ENCODE measurements at regions of chr12 and their contacts with region 1.

Region 1: DNA sequence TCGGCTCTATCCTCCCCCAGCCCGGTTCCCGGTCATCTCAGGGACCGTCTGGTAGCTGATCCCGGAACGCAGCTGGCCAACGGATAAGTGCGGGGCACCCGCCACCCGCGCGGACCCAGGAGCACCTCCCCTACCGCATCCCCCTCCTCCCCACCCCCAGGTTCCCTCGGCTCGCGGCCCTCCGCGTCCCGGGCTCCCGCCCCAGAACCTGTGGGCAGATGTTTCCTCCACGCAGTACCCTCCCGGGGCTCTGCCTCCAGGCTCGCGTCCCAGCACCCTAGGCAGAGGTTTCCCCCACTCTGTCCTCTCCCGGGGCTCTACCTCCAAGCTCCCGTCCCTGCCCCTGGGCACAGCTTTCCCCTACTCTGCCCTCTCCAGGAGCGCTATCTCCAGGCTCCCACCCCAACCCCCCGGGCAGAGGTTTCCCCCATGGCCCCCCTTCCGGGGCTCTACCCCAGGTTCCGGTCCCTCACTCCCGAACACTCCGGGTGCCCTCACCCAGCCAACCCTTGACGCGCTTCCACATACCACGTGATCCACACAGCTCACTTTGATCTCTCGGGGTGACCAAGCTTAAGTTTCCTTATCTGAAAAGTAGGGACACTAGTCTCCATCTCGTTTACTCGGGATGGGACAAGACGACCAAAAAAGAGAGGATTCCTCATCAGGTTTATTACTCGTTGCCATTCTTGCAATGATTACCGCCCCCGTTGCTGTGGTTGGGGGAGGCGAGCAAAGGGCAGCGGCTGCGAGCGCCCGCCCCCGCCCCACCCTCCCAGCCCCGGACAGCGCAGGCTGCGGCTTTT is at the start of gene CCDC38:
- DNase-seq: peak; percentile 79 to 87 (median 84)
- H3K4me3 ChIP-seq: peak within 1 kb of the TSS; percentile 69 to 92
- H3K4me3 Mint-ChIP-seq: peak within 1 kb of the TSS; percentile 92 to 97 (median 95)
- H3K27ac ChIP-seq: peak within 1 kb of the TSS; percentile 70
- H3K27ac Mint-ChIP-seq: peak within 1 kb of the TSS; percentile 86 to 97 (median 93)
- H3K4me1 ChIP-seq: peaks cover 12% of the 10 kb centered on the region
- H3K4me1 Mint-ChIP-seq: peaks cover 5 to 12% (median 7%) of the 10 kb centered on the region in 4 donors
- H3K27me3 ChIP-seq: no peaks in the 10 kb centered on the region
- H3K27me3 Mint-ChIP-seq: no peaks in the 10 kb centered on the region
- total RNA-seq, gene CCDC38: 0.23 to 1.0 TPM

Region 2: GRCh38 chr12:95473884-95474659 is 468.7 kb before region 1 on chr12 and contains the start of gene METAP2:
- CTCF ChIA-PET with region 1: no interaction called
- POLR2A ChIA-PET with region 1: interaction called, 21 read pairs
- intact Hi-C with region 1: no loop called
- DNase-seq: peak; percentile 87 to 92 (median 88)
- H3K4me3 ChIP-seq: peak within 1 kb of the TSS; percentile 83 to 99
- H3K4me3 Mint-ChIP-seq: peak within 1 kb of the TSS; percentile 99 to 100 (median 100)
- H3K27ac ChIP-seq: peak within 1 kb of the TSS; percentile 78
- H3K27ac Mint-ChIP-seq: peak within 1 kb of the TSS; percentile 90 to 100 (median 98)
- H3K4me1 ChIP-seq: peaks cover 50% of the 10 kb centered on the region
- H3K4me1 Mint-ChIP-seq: peaks cover 36 to 64% (median 54%) of the 10 kb centered on the region in 4 donors
- H3K27me3 ChIP-seq: no peaks in the 10 kb centered on the region
- H3K27me3 Mint-ChIP-seq: no peaks in the 10 kb centered on the region
- total RNA-seq, gene METAP2: 50.7 to 52.7 TPM

Region 3: DNA sequence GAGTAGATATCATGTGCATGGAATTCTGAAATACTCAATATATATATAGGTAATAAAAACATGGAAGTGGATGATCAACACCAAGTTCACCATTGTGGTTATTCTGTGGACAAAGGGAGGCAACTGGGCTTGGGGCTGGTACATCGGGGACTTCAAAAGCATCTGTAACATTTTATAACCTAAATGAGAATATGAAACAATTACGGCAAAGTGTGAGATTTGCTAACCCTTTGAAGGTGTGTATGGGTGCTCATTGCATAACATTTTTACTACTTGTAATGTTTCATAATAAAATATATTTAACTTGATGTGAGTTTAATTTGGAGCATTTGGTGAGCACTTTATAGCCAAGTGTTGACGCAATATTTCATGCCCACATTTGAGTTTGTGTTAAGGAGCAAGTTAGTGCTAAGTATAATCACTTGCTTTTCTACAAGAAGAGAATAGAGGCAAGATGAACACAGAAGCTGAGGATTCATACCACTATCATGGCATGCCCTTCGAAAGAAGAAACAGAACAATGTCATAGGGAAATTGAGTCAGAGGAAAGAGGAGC is 261.4 kb before region 1 on chr12:
- CTCF ChIA-PET with region 1: no interaction called
- POLR2A ChIA-PET with region 1: no interaction called
- intact Hi-C with region 1: no loop called
- DNase-seq: no peak
- H3K4me3 ChIP-seq: no peak overlapping the region
- H3K4me3 Mint-ChIP-seq: no peak overlapping the region
- H3K27ac ChIP-seq: no peak overlapping the region
- H3K27ac Mint-ChIP-seq: no peak overlapping the region
- H3K4me1 ChIP-seq: no peaks in the 10 kb centered on the region
- H3K4me1 Mint-ChIP-seq: no peaks in the 10 kb centered on the region
- H3K27me3 ChIP-seq: no peaks in the 10 kb centered on the region
- H3K27me3 Mint-ChIP-seq: peaks cover 2 to 4% of the 10 kb centered on the region in 2 donors

Region 4: DNA sequence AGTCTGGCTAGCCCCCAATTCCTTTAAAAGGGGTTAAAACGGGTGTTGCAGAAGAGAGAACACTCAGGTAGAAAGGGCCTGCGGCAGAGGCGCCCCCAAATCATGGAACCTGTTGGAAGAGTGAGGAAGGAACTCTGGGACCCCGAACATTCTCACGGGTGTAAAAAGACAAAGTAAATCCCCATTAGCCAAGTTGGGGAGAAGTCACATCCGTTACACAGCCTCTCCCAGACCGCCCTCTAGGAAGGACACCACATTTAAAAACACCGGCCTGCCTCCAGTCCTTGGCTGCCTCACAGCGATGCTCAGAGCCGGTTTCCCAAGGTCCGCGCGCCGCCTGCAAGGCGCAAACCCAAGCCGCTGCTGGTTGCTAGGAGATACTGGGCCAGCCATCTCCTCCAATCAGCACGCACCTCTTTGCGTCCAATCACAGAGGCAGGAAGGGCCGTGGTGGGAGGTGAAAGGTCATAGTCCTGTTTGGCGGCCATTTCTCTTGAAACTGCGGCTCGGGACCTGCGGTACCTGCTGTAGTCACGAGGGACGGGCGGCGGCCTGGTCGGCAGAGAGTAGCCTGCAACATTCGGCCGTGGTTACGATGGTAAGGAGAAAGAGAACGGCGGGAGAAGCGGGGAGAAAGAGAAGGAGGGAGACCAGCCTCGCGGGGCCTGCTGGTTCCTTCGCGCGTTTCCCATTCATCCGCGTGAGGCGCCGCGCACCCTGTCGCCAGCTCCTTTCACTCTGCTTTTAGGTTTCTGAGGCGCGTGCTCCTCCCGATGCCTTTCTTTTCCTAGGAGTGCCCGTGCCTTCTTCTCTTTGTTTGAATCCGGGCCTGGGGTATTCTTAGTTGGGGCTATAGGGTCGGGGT is 84.0 kb before region 1 on chr12 and contains the start of gene SNRPF:
- CTCF ChIA-PET with region 1: interaction called, 4 read pairs
- POLR2A ChIA-PET with region 1: interaction called, 5 read pairs
- intact Hi-C with region 1: loop called (anchors 1 kb)
- DNase-seq: peak; percentile 93 to 96 (median 94)
- H3K4me3 ChIP-seq: peak within 1 kb of the TSS; percentile 77 to 90
- H3K4me3 Mint-ChIP-seq: peak within 1 kb of the TSS in 1 of 8 donors; percentile 0
- H3K27ac ChIP-seq: peak within 1 kb of the TSS; percentile 75
- H3K27ac Mint-ChIP-seq: peak within 1 kb of the TSS in 1 of 7 donors; percentile 60
- H3K4me1 ChIP-seq: peaks cover 33% of the 10 kb centered on the region
- H3K4me1 Mint-ChIP-seq: peaks cover 13 to 26% (median 17%) of the 10 kb centered on the region in 4 donors
- H3K27me3 ChIP-seq: no peaks in the 10 kb centered on the region
- H3K27me3 Mint-ChIP-seq: no peaks in the 10 kb centered on the region
- total RNA-seq, gene SNRPF: 16.7 to 19.5 TPM

Region 5: DNA sequence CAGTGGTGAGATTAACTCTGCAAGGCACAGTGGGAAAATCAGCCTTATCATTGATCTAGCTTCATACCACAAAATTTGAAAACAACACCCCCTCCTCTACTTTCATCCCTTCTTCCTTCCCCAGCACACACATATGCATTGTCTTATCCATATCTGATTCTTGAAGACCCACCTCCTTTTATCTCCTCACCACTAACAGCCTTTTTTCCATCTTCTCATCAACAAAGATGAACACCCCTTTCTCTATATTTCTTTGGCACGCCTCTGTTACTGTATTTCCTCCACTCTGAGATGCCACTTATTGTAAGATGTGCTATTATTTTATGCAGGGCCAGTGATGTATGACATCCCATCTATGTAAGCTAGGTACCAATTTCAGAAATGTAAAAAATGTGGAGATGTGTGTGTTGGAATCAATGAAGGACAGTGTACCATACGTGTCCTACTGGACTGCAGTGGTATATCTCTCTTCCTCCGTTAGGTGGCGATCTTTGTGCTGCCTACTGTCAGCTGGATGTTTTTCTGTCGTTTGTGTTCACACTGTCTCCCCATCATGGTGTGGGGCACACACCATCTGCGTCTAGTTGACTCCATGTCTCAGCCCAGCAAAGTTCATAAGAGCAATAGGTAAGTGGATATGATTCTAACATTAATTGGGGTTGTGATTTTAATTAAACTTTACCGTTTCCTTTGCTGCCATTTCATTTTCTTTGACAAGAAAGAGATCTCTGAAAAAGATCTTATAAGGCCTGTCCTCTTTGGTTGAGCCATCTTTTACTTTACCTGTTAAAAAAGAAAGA is 24.3 kb before region 1 on chr12:
- CTCF ChIA-PET with region 1: interaction called, 13 read pairs
- POLR2A ChIA-PET with region 1: interaction called, 7 read pairs
- intact Hi-C with region 1: loop called (anchors 1 kb)
- DNase-seq: peak; percentile 44 to 61 (median 57)
- H3K4me3 ChIP-seq: no peak overlapping the region
- H3K4me3 Mint-ChIP-seq: no peak overlapping the region
- H3K27ac ChIP-seq: no peak overlapping the region
- H3K27ac Mint-ChIP-seq: no peak overlapping the region
- H3K4me1 ChIP-seq: no peaks in the 10 kb centered on the region
- H3K4me1 Mint-ChIP-seq: no peaks in the 10 kb centered on the region
- H3K27me3 ChIP-seq: no peaks in the 10 kb centered on the region
- H3K27me3 Mint-ChIP-seq: no peaks in the 10 kb centered on the region

Region 6: GRCh38 chr12:95955549-95956159 is 12.9 kb after region 1 on chr12:
- CTCF ChIA-PET with region 1: interaction called, 9 read pairs
- POLR2A ChIA-PET with region 1: interaction called, 11 read pairs
- intact Hi-C with region 1: no loop called
- DNase-seq: no peak
- H3K4me3 ChIP-seq: no peak overlapping the region
- H3K4me3 Mint-ChIP-seq: no peak overlapping the region
- H3K27ac ChIP-seq: no peak overlapping the region
- H3K27ac Mint-ChIP-seq: no peak overlapping the region
- H3K4me1 ChIP-seq: no peaks in the 10 kb centered on the region
- H3K4me1 Mint-ChIP-seq: no peaks in the 10 kb centered on the region
- H3K27me3 ChIP-seq: no peaks in the 10 kb centered on the region
- H3K27me3 Mint-ChIP-seq: peaks cover 0 to 8% of the 10 kb centered on the region in 2 donors

Region 7: GRCh38 chr12:95998611-95999286 is 56.0 kb after region 1 on chr12:
- CTCF ChIA-PET with region 1: interaction called, 34 read pairs
- POLR2A ChIA-PET with region 1: no interaction called
- intact Hi-C with region 1: no loop called
- DNase-seq: peak; percentile 48 to 67 (median 59)
- H3K4me3 ChIP-seq: no peak overlapping the region
- H3K4me3 Mint-ChIP-seq: no peak overlapping the region
- H3K27ac ChIP-seq: no peak overlapping the region
- H3K27ac Mint-ChIP-seq: peak overlapping the region in 1 of 7 donors; percentile 70
- H3K4me1 ChIP-seq: no peaks in the 10 kb centered on the region
- H3K4me1 Mint-ChIP-seq: peaks cover 3 to 6% (median 5%) of the 10 kb centered on the region in 4 donors
- H3K27me3 ChIP-seq: no peaks in the 10 kb centered on the region
- H3K27me3 Mint-ChIP-seq: no peaks in the 10 kb centered on the region

Region 8: GRCh38 chr12:96906849-96907670 is 964.3 kb after region 1 on chr12 and contains the start of gene NEDD1:
- CTCF ChIA-PET with region 1: no interaction called
- POLR2A ChIA-PET with region 1: interaction called, 6 read pairs
- intact Hi-C with region 1: loop called (anchors 2 kb)
- DNase-seq: peak; percentile 81 to 86 (median 82)
- H3K4me3 ChIP-seq: peak within 1 kb of the TSS; percentile 80 to 97
- H3K4me3 Mint-ChIP-seq: peak within 1 kb of the TSS; percentile 93 to 98 (median 96)
- H3K27ac ChIP-seq: peak within 1 kb of the TSS; percentile 96
- H3K27ac Mint-ChIP-seq: peak within 1 kb of the TSS; percentile 94 to 99 (median 99)
- H3K4me1 ChIP-seq: peaks cover 46% of the 10 kb centered on the region
- H3K4me1 Mint-ChIP-seq: peaks cover 37 to 55% (median 44%) of the 10 kb centered on the region in 4 donors
- H3K27me3 ChIP-seq: no peaks in the 10 kb centered on the region
- H3K27me3 Mint-ChIP-seq: peaks cover 0 to 2% of the 10 kb centered on the region in 2 donors
- total RNA-seq, gene NEDD1: 24.6 to 27.9 TPM

Measured in CD4-positive, alpha-beta memory T cell (primary cell).